Cardiac septum (tissue), 1 donor: ENCODE measurements at regions of chr1 and their contacts with region 1.

Region 1: DNA sequence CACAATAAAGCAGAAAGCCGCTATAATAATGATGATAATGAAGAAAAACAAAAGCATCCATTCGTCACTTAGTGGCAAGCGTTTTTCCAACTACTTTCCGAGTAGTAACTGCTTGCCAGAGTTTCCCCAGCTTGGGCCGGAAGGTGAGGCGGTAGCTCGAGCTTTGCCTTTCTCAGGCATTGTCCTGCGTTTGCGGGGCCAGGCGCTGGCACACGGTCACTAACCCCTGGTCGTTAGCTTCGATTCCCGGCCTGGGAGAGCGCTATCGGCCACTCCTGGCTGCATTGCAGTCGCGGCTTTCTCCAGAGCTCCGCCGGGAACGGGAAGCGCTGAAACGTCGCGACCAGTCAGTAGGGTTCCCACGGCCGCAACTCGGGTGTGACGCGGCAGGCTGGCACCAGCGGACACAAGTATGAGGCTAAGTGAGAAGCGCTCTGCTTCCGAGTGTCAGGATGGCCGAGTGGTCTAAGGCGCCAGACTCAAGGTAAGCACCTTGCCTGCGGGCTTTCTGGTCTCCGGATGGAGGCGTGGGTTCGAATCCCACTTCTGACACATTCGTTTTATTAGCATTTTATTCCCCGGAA is 14.6 kb upstream of the ZNF692 start:
- DNase-seq: peak; percentile 96

Region 2: GRCh38 chr1:248622570-248623001 is 250.9 kb before region 1 on chr1:
- intact Hi-C with region 1: no loop called
- DNase-seq: no peak

Region 3: GRCh38 chr1:248906009-248906752 is 32.7 kb after region 1 on chr1 and contains the start of gene PGBD2:
- intact Hi-C with region 1: loop called (anchors 1 kb)
- DNase-seq: peak; percentile 98
- total RNA-seq, gene PGBD2: 2.9 TPM